A673 (cell line): ENCODE measurements at regions of chr6 and their contacts with region 1.

Region 1: DNA sequence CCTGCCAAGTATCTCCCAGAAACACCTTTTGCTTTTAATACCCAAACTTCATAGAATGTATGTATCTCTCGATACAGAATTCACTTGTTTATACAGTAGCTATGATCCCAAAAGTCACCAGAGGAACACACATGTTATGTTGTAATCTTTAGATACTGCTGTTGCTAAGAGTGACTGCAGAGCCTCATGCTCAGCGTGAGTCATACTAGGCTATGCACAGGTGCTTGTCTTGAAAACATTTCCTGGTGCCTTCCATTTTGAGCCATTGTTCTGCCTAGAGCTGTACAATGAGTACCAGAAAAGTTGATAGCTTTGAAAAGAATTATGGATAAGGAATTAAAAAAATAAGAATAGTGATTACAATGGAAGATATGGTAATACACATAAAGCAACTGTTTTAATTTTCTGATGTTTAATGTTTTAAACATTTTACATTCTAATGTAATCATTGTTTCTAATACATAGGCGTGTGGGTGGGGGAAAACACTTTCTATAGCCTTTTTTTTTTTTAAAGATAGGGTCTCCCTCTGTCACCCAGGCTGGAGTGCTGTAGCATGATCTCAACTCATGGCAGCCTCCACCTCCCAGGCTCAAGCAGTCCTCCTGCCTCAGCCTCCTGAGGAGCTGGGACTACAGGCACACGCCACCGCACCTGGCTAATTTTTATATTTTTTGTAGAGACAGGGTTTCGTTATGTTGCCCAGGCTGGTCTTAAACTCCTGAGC is 79.4 kb downstream of the CD24 start:
- DNase-seq: no peak
- H3K4me3 ChIP-seq: no peak overlapping the region
- H3K27ac ChIP-seq: no peak overlapping the region
- H3K4me1 ChIP-seq: no peaks in the 10 kb centered on the region
- H3K27me3 ChIP-seq: peaks cover 5% of the 10 kb centered on the region
- CTCF ChIP-seq: no peak

Region 2: DNA sequence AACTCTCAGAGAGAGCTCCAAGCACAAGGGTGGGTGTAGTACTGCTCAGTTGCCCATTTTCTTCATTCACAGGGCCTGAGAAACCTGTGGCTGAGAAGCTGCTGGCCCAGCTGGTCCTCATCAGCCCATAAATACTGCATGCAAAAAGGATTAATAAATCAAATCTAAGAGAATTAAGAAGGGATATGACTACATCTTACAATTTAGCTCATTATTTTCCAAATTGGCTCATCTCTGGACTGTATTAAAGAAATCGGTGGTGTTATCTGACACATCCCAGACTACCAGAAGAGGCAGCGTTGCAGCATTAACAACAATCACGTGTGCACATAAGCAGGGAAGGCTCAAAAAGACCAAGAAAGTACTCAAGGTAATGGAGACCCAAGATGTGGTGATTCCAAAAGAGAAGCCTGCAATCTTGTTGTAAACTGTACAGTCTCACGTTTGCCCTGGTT is 11.3 kb before region 1 on chr6:
- CTCF ChIA-PET with region 1: no interaction called
- POLR2A ChIA-PET with region 1: no interaction called
- intact Hi-C with region 1: no loop called
- DNase-seq: peak; percentile 18
- H3K4me3 ChIP-seq: no peak overlapping the region
- H3K27ac ChIP-seq: no peak overlapping the region
- H3K4me1 ChIP-seq: no peaks in the 10 kb centered on the region
- H3K27me3 ChIP-seq: no peaks in the 10 kb centered on the region
- CTCF ChIP-seq: peak; percentile 43

Region 3: GRCh38 chr6:107033126-107033525 is 138.0 kb after region 1 on chr6:
- CTCF ChIA-PET with region 1: interaction called, 11 read pairs
- POLR2A ChIA-PET with region 1: no interaction called
- intact Hi-C with region 1: no loop called
- DNase-seq: no peak
- H3K4me3 ChIP-seq: no peak overlapping the region
- H3K27ac ChIP-seq: no peak overlapping the region
- H3K4me1 ChIP-seq: no peaks in the 10 kb centered on the region
- H3K27me3 ChIP-seq: no peaks in the 10 kb centered on the region
- CTCF ChIP-seq: no peak